Right ventricle myocardium superior (tissue), 1 donor: ENCODE measurements at regions of chr4 and their contacts with region 1.

Region 1: DNA sequence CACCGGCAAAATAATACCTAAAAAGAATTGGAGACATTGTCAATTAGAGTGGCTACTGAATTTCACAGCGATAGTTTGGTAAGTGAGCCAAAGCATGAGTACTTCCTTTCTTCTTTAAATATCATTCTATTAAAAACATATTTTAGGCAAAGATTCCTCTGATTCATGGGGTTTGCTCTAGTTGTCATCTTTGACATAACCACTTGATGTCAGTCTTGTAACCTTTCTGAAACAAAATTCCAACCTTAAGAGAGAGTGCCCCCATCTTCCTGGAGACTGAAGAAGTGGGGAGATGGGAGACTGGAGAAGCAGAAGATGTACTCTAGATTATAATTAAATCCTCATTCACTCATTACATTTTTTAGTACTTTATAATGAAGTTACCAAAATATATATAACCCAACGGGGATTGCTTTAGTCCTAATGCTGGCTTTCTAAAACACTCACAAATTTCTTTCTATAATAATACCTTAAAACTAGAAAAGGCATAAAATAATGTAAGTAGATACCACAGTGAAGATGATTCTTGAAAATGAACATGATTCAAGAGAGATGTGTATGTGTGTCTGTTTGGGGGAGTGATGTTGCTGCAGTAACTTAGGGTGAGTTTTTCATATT is 96.4 kb downstream of the EMCN start:
- DNase-seq: no peak
- ATAC-seq: no peak

Region 2: DNA sequence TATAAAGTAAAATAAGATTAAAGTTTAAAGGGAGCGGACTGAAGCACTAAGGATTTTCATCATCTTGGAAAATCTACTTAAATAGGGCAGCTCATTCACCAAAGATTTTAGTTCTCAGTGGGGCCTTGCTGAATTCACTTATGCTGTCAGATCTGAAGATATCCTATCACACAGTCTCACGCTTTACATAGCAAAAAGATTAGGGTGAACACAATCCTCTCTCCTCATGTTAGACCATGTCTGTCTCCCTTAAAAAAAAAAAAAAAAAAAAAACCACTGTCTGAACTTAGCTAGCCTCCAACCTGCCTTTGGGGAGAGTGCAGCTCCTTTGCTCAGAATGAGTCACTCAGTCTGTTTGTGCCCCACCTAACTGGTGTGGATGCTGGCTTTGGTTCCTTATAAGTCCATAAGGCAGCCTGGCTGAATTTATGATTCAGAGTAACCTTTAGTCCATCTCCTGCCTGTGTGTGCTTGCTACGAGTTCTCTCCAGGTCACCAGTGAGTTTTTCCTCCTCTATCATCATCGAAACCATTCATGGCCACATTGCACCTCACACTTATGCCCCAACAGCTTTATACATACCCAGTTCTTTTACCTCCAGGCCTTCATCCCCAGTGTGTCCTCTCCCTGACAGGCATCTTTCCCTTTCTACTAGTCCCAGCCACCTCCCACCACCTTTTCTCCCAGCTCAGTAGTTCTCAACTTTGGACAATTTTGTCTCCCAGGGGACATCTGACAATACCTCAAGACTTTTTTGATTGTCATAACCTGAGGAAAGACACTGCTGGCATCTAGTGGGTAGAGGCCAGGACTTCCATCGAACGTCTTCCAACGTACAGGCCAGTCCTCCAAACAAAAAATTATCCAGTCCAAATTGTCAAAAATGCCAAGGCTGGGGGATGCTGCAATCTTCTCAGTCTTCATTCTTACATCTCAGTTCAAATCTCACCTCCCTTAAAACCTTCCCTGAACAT is 317.0 kb after region 1 on chr4:
- intact Hi-C with region 1: loop called (anchors 10 kb)
- DNase-seq: no peak
- ATAC-seq: peak; percentile 53